ENCODE measurements at regions of chr13 and their contacts with region 1.

Region 1: DNA sequence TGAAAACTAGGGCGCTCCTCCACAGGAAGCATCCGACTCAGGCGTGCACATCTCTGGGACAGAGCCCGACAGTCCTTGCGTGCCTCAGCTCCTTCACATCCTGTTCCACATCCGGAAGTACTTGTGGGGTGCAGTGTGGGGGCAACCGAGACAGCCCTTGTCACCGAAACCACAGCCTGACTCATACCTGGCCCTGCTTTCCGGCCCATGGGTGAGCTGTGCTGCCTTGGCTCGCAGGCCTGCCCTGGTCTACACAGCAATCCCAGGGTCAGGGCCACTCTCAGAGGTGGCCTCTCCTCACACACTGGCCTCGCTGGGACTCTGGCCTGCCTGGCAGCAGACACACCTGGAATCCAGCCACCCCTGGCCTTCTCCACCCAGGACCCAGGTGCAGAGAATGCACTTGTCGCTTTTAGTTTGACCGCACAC is 100.4 kb downstream of the STK24 start:
- DNase-seq: no peak
- H3K4me3 ChIP-seq: no peak overlapping the region
- H3K27ac ChIP-seq: no peak overlapping the region
- H3K4me1 ChIP-seq: peaks cover 30% of the 10 kb centered on the region
- H3K27me3 ChIP-seq: no peaks in the 10 kb centered on the region
- CTCF ChIP-seq: no peak
- POLR2A ChIP-seq: no peak

Region 2: DNA sequence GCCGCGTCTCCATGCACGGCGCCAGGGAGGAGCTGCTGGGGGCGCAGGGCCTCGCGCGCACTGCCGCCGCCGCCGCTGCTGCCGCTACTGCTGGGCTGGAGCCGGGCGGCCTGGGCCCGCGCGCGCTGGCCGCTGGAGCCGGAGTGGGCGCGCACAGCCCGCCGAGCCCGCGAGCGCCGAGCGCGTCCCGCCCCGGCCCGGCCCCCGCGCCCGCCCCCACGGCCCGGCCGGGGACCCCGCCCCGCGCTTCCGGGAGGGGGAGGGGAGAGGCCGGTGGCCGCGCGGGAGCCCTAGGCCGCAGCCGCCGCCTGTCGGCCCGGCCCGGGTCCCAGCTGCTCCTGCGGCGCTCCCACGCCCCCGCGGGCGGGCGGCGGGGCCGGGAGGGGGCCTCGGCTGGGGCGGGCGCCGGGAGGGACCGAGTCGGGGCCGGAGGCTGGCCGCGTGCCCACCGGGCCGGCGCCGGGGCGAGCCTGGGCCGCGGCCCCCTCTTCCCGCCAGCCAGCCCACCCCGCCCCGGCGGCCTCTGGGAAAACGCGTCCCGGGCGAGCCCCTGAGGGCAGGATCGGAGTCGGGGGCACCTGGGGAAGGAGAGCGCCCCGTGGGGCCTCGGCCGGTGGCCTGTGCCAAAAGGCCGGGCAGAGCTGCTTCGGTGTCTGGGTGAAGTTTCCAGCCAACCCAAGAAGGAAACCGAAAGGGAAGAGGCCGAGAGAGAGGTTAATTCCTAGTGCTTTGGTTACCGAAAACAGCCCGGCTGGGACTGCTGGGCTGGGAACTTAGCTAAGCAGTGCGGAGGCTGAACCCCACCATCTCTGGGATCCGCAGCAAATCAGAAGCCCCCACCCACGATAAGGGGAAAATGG is 100.6 kb after region 1 on chr13 and contains the start of gene STK24:
- intact Hi-C with region 1: loop called (anchors 10 kb)
- DNase-seq: peak; percentile 58
- H3K4me3 ChIP-seq: peak within 1 kb of the TSS; percentile 91 to 94
- H3K27ac ChIP-seq: peak within 1 kb of the TSS; percentile 96 to 98
- H3K4me1 ChIP-seq: peaks cover 27% of the 10 kb centered on the region
- H3K27me3 ChIP-seq: no peaks in the 10 kb centered on the region
- CTCF ChIP-seq: no peak
- POLR2A ChIP-seq: no peak
- total RNA-seq, gene STK24: 151 to 172 TPM

Measured in testis (tissue), 5 donors.